ENCODE measurements at regions of chr2 and their contacts with region 1.

Region 1: DNA sequence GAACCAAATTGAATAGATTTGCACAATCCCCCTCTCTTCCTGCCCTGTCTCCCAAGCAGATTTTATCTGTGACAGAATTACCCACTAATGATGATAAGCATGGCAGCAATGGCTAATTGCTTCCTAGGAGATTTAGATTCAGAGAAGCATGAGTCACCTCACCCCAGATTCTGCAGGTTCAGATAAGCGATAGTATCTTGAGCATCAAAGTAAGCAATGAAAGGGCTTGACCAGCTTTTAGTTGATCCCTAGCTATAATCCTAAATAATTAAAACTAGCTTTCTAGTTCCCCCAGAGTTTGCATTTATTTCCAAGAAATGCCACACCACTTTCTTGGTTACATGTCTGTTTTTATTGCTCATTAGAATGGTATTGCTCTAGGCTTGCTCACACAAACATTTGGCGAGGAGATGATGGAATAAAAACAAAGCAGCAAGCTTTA is 204.3 kb downstream of the GULP1 start:
- DNase-seq: no peak
- H3K4me3 ChIP-seq: no peak overlapping the region
- H3K27ac ChIP-seq: peak overlapping the region; percentile 34 to 62
- H3K4me1 ChIP-seq: peaks cover 0 to 19% of the 10 kb centered on the region in 2 donors
- H3K27me3 ChIP-seq: no peaks in the 10 kb centered on the region
- CTCF ChIP-seq: no peak

Region 2: GRCh38 chr2:188381614-188382013 is 114.4 kb before region 1 on chr2:
- intact Hi-C with region 1: loop called (anchors 10 kb)
- DNase-seq: no peak
- H3K4me3 ChIP-seq: no peak overlapping the region
- H3K27ac ChIP-seq: peak overlapping the region; percentile 77 to 85
- H3K4me1 ChIP-seq: peaks cover 0 to 7% of the 10 kb centered on the region in 2 donors
- H3K27me3 ChIP-seq: no peaks in the 10 kb centered on the region
- CTCF ChIP-seq: no peak

Measured in ascending aorta (tissue), 2 donors.